ENCODE measurements at regions of chr1 and their contacts with region 1.

Region 1: DNA sequence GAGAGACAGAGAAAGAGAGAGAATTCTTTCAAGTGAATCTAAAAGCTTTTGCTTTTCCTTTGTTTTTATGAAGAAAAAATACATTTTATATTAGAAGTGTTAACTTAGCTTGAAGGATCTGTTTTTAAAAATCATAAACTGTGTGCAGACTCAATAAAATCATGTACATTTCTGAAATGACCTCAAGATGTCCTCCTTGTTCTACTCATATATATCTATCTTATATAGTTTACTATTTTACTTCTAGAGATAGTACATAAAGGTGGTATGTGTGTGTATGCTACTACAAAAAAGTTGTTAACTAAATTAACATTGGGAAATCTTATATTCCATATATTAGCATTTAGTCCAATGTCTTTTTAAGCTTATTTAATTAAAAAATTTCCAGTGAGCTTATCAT is 117.6 kb downstream of the PTPRC start:
- H3K4me3 ChIP-seq: no peak overlapping the region
- H3K27ac ChIP-seq: no peak overlapping the region
- H3K4me1 ChIP-seq: no peaks in the 10 kb centered on the region
- CTCF ChIP-seq: no peak

Region 2: DNA sequence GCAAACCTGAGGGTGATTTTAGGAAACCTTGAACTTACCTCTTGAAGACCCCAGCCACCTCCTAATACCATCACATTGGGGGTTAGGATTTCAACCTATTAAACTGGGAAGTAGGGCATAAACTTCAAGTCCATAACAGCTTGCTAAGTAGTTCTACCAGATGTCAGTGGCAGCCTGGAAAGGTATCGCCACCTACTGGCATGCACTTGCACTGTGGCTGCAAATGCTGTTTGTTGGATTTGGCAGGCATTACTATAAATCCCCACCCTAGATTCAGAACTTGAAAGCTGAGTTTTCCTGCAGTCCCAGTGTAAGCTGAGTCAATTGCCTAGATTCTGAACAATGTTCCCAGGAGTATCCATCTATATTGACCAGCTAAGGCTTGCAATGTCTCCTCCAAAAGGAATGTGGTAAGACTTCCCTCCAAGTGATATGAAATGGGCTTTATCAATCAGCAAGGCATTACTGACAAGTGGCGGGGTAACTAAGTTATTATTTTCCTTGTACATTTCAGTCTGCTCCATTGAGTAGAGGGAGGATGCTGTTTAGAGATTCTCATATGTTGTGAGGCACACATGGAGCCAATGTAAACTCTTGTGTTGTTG is 356.9 kb after region 1 on chr1:
- CTCF ChIA-PET with region 1: interaction called, 18 read pairs
- POLR2A ChIA-PET with region 1: no interaction called
- H3K4me3 ChIP-seq: no peak overlapping the region
- H3K27ac ChIP-seq: no peak overlapping the region
- H3K4me1 ChIP-seq: no peaks in the 10 kb centered on the region
- CTCF ChIP-seq: no peak

Region 3: GRCh38 chr1:199422198-199422597 is 665.7 kb after region 1 on chr1:
- CTCF ChIA-PET with region 1: interaction called, 10 read pairs
- POLR2A ChIA-PET with region 1: no interaction called
- H3K4me3 ChIP-seq: no peak overlapping the region
- H3K27ac ChIP-seq: no peak overlapping the region
- H3K4me1 ChIP-seq: no peaks in the 10 kb centered on the region
- CTCF ChIP-seq: no peak